Posterior cingulate gyrus (tissue), 11 donors: ENCODE measurements at regions of chr2 and their contacts with region 1.

Region 1: GRCh38 chr2:21118302-21118920 is 5.4 kb upstream of the TDRD15 start:
- DNase-seq: peak in 7 of 10 donors; percentile 22 to 48 (median 41)

Region 2: DNA sequence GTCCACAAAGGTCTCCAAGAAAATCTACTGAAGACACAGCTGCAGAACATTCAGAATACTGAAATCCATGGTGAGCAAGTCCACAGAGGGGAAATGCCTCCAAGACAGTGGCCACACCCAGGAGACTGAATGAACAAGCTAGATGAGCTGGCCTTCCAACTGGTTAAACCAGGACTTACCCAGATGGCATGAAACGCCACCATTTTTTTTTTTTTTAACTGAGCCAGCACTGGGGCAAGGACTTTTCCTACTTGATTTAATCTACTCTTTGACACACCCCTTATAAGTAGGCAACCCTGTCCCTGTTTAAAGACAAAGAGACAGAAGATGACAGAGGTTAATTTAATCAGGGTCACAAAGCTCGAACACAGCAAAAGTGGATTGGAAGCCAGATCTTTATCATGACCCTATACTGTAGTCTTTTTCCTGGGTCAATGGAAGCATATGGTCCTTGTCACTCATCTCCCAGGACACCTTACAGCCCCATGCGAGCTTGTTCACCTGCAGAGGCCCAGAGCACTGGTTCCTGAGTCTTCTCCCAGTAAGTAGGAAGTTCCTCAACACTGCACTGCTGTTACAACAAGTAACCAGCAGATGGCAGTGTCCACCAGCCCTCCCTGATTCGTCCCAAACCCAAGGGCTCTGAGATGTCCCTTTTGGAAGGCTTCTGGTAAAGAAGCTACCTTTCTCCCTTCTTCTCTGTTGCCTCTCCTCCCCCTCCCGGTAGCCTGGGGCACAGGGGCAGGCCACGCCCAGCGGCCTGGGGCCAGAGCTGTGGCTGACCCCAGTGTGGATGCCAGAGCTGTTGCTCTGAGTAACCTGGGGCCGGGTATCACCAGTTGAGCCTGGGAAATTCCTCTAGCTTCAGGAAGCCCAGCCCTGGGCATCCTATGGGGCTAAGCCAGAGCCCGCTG is 457.1 kb before region 1 on chr2:
- intact Hi-C with region 1: loop called (anchors 2 kb)
- DNase-seq: peak in 9 of 10 donors; percentile 56 to 95 (median 73)

Region 3: DNA sequence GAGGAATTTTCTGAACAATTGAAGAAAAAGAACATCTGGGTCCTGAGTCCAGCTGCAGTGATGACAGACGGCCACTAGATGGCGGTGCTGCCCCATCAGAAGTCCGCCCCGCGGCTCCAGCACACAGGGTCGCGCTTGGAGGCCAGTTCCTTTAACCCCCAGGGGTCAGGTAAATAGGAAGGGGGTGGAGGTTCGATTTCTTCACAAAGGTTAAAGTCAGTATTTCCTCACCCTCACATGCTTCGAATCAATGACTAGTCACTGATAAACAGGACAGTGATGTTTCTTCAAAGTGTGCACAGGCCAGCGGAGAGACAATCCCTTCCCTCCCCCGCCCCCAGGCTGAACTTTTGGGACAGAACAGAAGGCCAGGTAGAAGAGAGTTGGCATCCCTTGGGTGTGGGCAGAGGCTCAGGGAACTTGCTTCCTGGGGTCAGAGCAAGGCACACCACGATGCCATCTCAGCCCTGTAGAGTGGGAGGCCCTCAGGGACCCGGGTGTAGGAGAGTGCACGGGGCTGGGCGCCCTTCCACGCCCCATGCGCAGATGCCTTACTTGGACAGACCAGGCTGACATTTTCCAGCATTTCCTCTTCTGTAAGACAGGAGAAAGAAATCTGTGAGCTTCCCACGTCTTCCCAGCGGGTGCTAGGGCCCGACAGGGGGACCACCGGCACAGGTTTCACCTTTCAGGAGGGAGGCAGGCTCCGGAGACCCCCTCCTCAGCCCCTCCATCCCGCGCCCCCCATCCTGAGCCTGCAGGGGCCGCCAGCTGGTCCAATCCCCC is 75.3 kb before region 1 on chr2:
- intact Hi-C with region 1: loop called (anchors 1 kb)
- DNase-seq: peak; percentile 49 to 95 (median 74)

Region 4: GRCh38 chr2:21281791-21282514 is 163.5 kb after region 1 on chr2:
- intact Hi-C with region 1: no loop called
- DNase-seq: peak in 1 of 10 donors; percentile 62